ENCODE measurements at regions of chr6 and their contacts with region 1.

Region 1: DNA sequence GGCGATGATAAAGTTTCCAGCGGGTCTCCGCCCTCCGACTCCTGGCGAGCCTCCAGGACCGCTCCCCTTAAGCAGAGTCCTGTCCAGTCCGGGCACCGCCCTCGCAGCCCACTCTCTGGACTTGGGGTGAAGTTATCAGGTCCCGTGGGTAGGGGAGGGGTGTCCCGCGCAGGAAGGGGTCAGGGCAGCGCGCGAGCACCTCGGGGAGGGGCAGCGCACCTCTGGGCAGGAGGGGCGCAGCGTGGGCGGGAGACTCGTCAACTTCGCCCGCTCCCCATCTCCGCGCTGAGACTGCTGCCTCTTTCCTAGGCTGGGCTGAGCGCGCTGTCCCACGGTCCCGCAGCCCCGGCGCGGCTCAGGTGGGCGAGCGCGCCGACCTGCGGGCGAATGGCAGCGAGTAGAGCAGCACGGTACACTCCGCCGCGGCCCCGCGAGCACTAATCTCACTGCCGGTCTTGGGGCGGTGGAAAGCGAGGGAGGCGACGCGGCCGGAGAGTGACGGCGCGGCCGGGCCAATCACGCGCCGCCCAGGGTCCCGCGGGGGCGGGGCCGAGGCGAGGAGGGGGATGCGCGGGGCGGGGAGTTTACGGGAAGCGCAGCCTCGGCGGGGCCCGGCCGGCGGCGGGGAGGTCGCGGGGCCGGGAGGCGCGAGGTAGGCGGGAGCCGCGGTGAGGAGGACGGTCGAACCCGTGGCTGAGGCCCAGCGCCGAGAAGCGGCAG is at the start of gene MAN1A1:
- DNase-seq: no peak
- ATAC-seq: peak; percentile 80
- H3K4me3 ChIP-seq: peak within 1 kb of the TSS; percentile 84
- H3K27ac ChIP-seq: peak within 1 kb of the TSS; percentile 84
- H3K4me1 ChIP-seq: peaks cover 3% of the 10 kb centered on the region
- H3K27me3 ChIP-seq: no peaks in the 10 kb centered on the region
- CTCF ChIP-seq: 0 out of 6 replicates have a peak, but pooled peaks of 1 of the 3 experiments have one; percentile 12
- EP300 ChIP-seq: no peak
- POLR2A ChIP-seq: peak; percentile 100
- RAD21 ChIP-seq: no peak
- polyA plus RNA-seq, gene MAN1A1: 8.7 TPM

Region 2: GRCh38 chr6:119147101-119148053 is 202.1 kb before region 1 on chr6:
- CTCF ChIA-PET with region 1: interaction called, 94 read pairs
- POLR2A ChIA-PET with region 1: interaction called, 6 read pairs
- RAD21 ChIA-PET with region 1: interaction called, 129 read pairs
- SMC1A ChIA-PET with region 1: interaction called, 88 read pairs
- in situ Hi-C with region 1: loop called (anchors 5 kb)
- intact Hi-C with region 1: loop called (anchors 1 kb)
- DNase-seq: peak; percentile 60
- ATAC-seq: peak; percentile 93
- H3K4me3 ChIP-seq: 0 out of 2 replicates have a peak overlapping the region, but pooled peaks have one; percentile 31
- H3K27ac ChIP-seq: peak overlapping the region; percentile 48; the same call in 1 of the 2 replicates
- H3K4me1 ChIP-seq: peaks cover 12% of the 10 kb centered on the region
- H3K27me3 ChIP-seq: no peaks in the 10 kb centered on the region; a peak in 2 of 4 replicates
- CTCF ChIP-seq: no peak
- EP300 ChIP-seq: peak in 1 of 2 experiments; percentile 43; a peak in 1 of 4 replicates
- POLR2A ChIP-seq: no peak
- RAD21 ChIP-seq: no peak

Region 3: DNA sequence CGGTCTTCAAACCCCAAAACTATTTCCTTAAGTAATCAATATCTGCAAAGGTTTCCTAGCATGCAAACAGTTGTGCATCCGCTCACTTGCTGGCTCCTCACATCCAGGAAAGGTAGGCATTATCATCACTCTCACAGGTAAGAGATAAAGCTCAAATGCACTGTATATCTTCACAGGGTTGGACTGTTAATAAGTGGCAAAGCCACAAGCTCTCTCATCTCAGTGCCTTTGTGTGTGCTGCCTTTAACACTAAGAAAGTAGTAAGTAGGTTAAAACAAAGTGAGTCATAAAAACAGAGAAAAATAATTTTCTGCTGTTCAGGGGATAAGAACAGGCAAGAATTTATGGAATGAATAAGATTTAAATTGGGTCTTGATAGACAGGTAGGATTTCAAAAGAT is 21.2 kb before region 1 on chr6:
- CTCF ChIA-PET with region 1: interaction called, 144 read pairs
- POLR2A ChIA-PET with region 1: interaction called, 52 read pairs
- RAD21 ChIA-PET with region 1: interaction called, 148 read pairs
- SMC1A ChIA-PET with region 1: interaction called, 168 read pairs
- in situ Hi-C with region 1: no loop called
- intact Hi-C with region 1: no loop called
- DNase-seq: no peak
- ATAC-seq: peak; percentile 27
- H3K4me3 ChIP-seq: no peak overlapping the region
- H3K27ac ChIP-seq: no peak overlapping the region
- H3K4me1 ChIP-seq: no peaks in the 10 kb centered on the region
- H3K27me3 ChIP-seq: no peaks in the 10 kb centered on the region
- CTCF ChIP-seq: no peak
- EP300 ChIP-seq: no peak
- POLR2A ChIP-seq: no peak
- RAD21 ChIP-seq: no peak

Region 4: DNA sequence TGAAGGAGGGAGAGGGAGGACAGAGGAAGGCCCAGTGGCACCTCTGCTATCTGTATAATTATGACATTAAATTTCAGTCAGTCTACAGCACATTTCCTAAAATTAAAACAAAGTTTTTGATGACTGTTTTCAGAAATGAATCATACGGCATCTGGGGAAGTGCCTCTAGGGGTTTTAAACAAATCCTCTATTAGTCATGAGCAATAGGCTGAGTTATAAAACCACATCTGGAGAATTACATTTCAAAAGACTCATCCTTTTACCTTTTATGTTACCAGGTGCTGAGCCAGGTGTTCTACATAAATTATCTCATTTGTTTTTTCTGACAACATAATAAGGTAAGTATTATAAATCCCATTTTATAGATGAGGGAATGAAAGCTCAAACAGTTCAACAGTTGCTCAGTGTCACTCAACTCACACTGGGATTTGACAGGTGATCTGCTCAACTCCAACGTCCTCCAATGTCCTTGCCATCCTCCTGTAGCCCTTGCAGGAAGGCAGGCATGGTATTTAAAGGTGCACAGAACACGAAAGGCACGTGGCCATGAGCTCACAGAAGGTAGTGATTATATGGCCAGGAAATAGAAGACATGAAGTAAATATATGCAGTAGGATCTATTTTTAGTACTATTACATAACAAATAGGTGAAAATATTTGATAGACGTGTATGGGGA is 184.3 kb after region 1 on chr6:
- CTCF ChIA-PET with region 1: interaction called, 11 read pairs
- POLR2A ChIA-PET with region 1: interaction called, 3 read pairs
- RAD21 ChIA-PET with region 1: interaction called, 9 read pairs
- SMC1A ChIA-PET with region 1: interaction called, 7 read pairs
- in situ Hi-C with region 1: no loop called
- intact Hi-C with region 1: loop called (anchors 5 kb)
- DNase-seq: peak; percentile 21
- ATAC-seq: peak; percentile 86
- H3K4me3 ChIP-seq: no peak overlapping the region
- H3K27ac ChIP-seq: 0 out of 2 replicates have a peak overlapping the region, but pooled peaks have one; percentile 15
- H3K4me1 ChIP-seq: peaks cover 13% of the 10 kb centered on the region
- H3K27me3 ChIP-seq: no peaks in the 10 kb centered on the region
- CTCF ChIP-seq: no peak
- EP300 ChIP-seq: peak; percentile 27 to 37; a peak in 1 of 4 replicates
- POLR2A ChIP-seq: no peak
- RAD21 ChIP-seq: no peak

Region 5: DNA sequence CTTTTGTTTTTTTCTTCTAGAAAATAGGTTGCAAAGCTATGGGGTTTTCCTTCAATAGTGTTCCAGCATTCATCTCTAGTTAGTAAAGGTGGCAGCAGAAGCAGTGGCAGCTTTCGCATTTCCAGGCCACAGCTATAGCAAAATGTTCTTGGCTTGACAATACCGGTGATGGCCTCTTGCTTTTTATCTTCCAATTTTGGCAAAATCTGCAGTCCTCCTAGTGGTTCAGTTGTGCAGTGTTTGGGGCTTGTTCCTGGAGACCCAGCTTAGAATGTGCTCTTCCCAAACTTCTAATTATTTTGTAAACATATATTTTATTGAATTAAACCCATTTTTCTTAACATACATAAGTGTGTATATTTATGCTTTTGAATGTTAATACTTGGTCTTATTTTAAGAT is 370.7 kb after region 1 on chr6:
- CTCF ChIA-PET with region 1: interaction called, 6 read pairs
- POLR2A ChIA-PET with region 1: interaction called, 4 read pairs
- RAD21 ChIA-PET with region 1: interaction called, 9 read pairs
- SMC1A ChIA-PET with region 1: interaction called, 8 read pairs
- in situ Hi-C with region 1: loop called (anchors 5 kb)
- intact Hi-C with region 1: loop called (anchors 5 kb)
- DNase-seq: no peak
- ATAC-seq: peak; percentile 63
- H3K4me3 ChIP-seq: no peak overlapping the region
- H3K27ac ChIP-seq: no peak overlapping the region
- H3K4me1 ChIP-seq: no peaks in the 10 kb centered on the region
- H3K27me3 ChIP-seq: no peaks in the 10 kb centered on the region
- CTCF ChIP-seq: peak in 1 of 3 experiments; percentile 9; a peak in 1 of 6 replicates
- EP300 ChIP-seq: no peak
- POLR2A ChIP-seq: no peak
- RAD21 ChIP-seq: peak; percentile 32; the same call in 1 of the 2 replicates

Measured in GM12878 (cell line).